Activated CD8-positive, alpha-beta T cell treated with anti-CD3 and anti-CD28 coated beads for 36 hours (primary cell): ENCODE measurements at regions of chr3 and their contacts with region 1.

Region 1: DNA sequence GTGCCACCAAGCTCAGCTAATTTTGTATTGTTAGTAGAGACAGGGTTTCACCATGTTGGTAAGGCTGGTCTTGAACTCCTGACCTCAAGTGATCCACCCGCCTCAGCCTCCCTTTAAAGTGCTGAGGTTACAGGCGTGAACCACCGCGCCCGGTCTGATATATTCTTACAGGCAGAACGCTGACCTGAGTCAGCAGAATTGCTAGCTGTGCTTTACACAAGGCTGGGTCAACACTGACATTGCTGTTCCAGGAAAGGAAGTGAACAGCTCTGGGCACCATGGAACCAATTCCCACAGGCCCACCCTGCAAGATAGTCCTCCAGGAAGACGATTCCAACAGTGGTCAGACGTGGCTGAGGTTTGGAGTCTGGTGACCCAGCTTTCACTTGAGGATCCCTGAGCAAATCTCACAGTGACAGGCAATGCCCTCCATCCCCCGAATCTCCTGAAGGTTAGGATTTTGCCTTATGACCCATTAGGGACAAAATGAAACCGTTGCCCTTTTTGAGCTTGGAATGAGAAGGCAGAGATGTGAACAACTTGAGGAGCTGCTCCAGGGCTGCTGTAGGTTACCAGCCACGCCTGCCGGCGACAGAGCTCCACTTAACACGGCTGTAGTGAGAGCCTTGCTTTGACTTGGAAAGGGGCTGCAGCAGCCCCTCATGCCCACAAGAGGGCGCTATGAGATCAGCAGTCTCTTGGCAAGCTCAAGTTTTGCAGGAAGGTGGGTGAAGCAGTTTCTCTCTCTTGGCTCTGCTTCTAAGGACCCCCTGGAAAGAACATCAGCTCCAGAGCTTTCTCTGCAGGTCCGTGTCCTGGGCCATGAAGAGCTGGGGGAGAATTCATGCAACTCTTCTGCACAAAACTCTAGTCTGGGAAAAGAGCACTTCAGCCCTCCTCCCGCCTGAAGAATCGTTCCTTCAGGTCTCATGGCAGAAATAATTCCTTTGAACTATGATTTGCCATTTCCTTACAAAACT is 74.1 kb downstream of the SENP2 start:
- DNase-seq: peak; percentile 80
- ATAC-seq: peak; percentile 94
- H3K4me3 Mint-ChIP-seq: no peak overlapping the region
- H3K27ac Mint-ChIP-seq: no peak overlapping the region
- H3K4me1 Mint-ChIP-seq: no peaks in the 10 kb centered on the region
- H3K27me3 Mint-ChIP-seq: peaks cover 6% of the 10 kb centered on the region
- CTCF ChIP-seq: peak; percentile 90

Region 2: GRCh38 chr3:185423178-185423577 is 237.1 kb before region 1 on chr3:
- CTCF ChIA-PET with region 1: no interaction called
- POLR2A ChIA-PET with region 1: no interaction called
- intact Hi-C with region 1: no loop called
- DNase-seq: no peak
- ATAC-seq: no peak
- H3K4me3 Mint-ChIP-seq: no peak overlapping the region
- H3K27ac Mint-ChIP-seq: no peak overlapping the region
- H3K4me1 Mint-ChIP-seq: no peaks in the 10 kb centered on the region
- H3K27me3 Mint-ChIP-seq: peaks cover 2% of the 10 kb centered on the region
- CTCF ChIP-seq: no peak

Region 3: DNA sequence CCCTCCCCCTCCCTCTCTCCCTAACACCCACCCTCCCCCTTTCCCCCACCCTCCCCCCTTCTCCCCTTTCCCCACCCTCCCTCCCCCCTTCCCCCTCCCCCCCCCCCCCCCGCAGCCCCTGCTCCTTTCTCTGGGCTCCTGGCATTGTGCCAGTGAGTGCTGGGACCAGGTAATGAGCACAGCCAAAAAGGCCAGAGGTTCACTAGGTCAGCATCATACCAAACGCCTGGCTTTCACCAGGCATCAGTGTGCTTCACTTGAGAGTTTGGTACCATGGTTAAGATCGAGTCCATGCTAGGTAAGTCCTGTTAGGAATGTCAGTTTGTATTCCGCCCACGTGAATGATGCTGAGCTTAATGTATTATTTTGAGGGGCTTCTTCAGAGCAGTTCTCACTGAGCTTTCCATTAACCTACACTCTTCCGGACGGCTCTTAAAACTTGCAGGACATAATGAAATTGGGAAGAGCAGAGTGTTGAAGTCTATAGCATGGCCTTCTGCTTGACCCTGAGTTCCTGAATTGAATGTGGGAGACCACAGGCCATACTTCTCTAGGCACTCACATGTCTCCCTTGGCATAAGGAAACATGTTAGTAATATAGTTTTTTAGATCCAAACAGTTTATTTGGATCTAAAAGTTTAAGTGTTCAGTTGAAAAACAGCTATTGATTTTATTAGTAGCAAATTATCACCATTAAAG is 28.6 kb before region 1 on chr3:
- CTCF ChIA-PET with region 1: interaction called, 12 read pairs
- POLR2A ChIA-PET with region 1: no interaction called
- intact Hi-C with region 1: no loop called
- DNase-seq: no peak
- ATAC-seq: no peak
- H3K4me3 Mint-ChIP-seq: no peak overlapping the region
- H3K27ac Mint-ChIP-seq: no peak overlapping the region
- H3K4me1 Mint-ChIP-seq: peaks cover 15% of the 10 kb centered on the region
- H3K27me3 Mint-ChIP-seq: no peaks in the 10 kb centered on the region
- CTCF ChIP-seq: no peak

Region 4: GRCh38 chr3:185677146-185677829 is 17.1 kb after region 1 on chr3:
- CTCF ChIA-PET with region 1: interaction called, 53 read pairs
- POLR2A ChIA-PET with region 1: interaction called, 3 read pairs
- intact Hi-C with region 1: no loop called
- DNase-seq: no peak
- ATAC-seq: peak; percentile 51
- H3K4me3 Mint-ChIP-seq: no peak overlapping the region
- H3K27ac Mint-ChIP-seq: no peak overlapping the region
- H3K4me1 Mint-ChIP-seq: no peaks in the 10 kb centered on the region
- H3K27me3 Mint-ChIP-seq: peaks cover 5% of the 10 kb centered on the region
- CTCF ChIP-seq: peak; percentile 42

Region 5: DNA sequence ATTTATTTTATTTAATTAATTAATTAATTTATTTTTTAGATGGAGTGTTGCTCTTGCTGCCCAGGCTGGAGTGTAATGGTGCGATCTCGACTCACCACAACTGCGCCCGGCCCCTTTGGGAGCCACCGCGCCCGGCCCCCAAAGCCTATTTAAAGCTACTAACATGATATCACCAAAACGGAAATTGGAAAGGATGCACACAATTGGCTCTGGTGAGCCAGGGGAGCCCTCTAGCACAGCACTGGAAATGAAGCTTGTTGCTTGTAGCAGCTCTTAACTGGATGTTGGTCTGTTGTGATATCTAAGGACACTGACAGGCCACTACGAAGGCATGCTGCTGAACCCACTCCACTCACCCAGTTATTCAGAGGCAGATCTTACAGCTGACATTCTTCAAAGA is 60.1 kb after region 1 on chr3:
- CTCF ChIA-PET with region 1: interaction called, 15 read pairs
- POLR2A ChIA-PET with region 1: no interaction called
- intact Hi-C with region 1: no loop called
- DNase-seq: no peak
- ATAC-seq: no peak
- H3K4me3 Mint-ChIP-seq: no peak overlapping the region
- H3K27ac Mint-ChIP-seq: no peak overlapping the region
- H3K4me1 Mint-ChIP-seq: no peaks in the 10 kb centered on the region
- H3K27me3 Mint-ChIP-seq: peaks cover 2% of the 10 kb centered on the region
- CTCF ChIP-seq: no peak

Region 6: GRCh38 chr3:185764163-185764979 is 104.1 kb after region 1 on chr3:
- CTCF ChIA-PET with region 1: interaction called, 59 read pairs
- POLR2A ChIA-PET with region 1: no interaction called
- intact Hi-C with region 1: loop called (anchors 1 kb)
- DNase-seq: no peak
- ATAC-seq: no peak
- H3K4me3 Mint-ChIP-seq: no peak overlapping the region
- H3K27ac Mint-ChIP-seq: no peak overlapping the region
- H3K4me1 Mint-ChIP-seq: no peaks in the 10 kb centered on the region
- H3K27me3 Mint-ChIP-seq: peaks cover 19% of the 10 kb centered on the region
- CTCF ChIP-seq: no peak

Region 7: DNA sequence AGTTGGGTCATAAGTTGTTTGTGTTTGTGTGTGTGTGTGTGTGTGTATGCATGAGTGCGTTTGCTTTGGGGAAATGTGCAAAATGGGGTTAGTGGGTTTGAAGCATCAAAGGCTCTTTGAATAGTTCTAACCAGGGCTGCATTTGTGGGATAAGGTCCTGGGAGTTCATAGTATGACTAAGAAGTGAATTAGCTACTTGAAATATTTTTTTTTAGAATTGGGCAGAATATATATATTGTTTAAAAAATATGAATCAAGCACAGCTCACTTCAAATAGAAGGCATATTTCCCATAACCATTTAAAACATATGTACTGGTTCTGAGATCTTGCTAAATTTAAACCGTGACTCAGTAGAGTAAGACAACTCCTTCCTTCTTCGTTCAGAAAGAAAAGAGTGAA is 121.5 kb after region 1 on chr3:
- CTCF ChIA-PET with region 1: interaction called, 12 read pairs
- POLR2A ChIA-PET with region 1: no interaction called
- intact Hi-C with region 1: no loop called
- DNase-seq: no peak
- ATAC-seq: no peak
- H3K4me3 Mint-ChIP-seq: no peak overlapping the region
- H3K27ac Mint-ChIP-seq: no peak overlapping the region
- H3K4me1 Mint-ChIP-seq: no peaks in the 10 kb centered on the region
- H3K27me3 Mint-ChIP-seq: no peaks in the 10 kb centered on the region
- CTCF ChIP-seq: no peak

Region 8: DNA sequence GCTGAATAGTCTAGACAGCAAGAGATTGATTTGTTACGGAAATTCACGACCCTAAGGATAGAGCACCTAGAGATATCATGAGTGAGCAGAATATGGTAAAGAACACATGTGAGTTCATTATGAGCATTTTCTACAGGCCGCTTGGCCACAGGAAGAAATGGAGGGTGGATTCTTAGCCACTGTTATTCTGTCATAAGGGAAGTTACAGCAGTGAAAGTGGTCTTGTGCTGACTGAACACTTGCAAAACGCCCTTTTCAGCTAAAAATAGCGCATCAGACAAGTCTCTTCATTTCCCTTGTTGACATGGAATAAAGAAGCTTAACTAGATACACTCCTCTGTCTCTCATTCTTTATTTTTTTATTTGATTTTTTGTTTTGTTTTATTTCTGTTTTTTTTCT is 682.0 kb after region 1 on chr3:
- CTCF ChIA-PET with region 1: no interaction called
- POLR2A ChIA-PET with region 1: no interaction called
- intact Hi-C with region 1: no loop called
- DNase-seq: no peak
- ATAC-seq: no peak
- H3K4me3 Mint-ChIP-seq: no peak overlapping the region
- H3K27ac Mint-ChIP-seq: no peak overlapping the region
- H3K4me1 Mint-ChIP-seq: peaks cover 13% of the 10 kb centered on the region
- H3K27me3 Mint-ChIP-seq: peaks cover 5% of the 10 kb centered on the region
- CTCF ChIP-seq: no peak